Right ventricle myocardium inferior (tissue), 1 donor: ENCODE measurements at regions of chr10 and their contacts with region 1.

Region 1: GRCh38 chr10:26556748-26557640 is 118.9 kb downstream of the APBB1IP start:
- DNase-seq: no peak
- ATAC-seq: peak; percentile 56

Region 2: DNA sequence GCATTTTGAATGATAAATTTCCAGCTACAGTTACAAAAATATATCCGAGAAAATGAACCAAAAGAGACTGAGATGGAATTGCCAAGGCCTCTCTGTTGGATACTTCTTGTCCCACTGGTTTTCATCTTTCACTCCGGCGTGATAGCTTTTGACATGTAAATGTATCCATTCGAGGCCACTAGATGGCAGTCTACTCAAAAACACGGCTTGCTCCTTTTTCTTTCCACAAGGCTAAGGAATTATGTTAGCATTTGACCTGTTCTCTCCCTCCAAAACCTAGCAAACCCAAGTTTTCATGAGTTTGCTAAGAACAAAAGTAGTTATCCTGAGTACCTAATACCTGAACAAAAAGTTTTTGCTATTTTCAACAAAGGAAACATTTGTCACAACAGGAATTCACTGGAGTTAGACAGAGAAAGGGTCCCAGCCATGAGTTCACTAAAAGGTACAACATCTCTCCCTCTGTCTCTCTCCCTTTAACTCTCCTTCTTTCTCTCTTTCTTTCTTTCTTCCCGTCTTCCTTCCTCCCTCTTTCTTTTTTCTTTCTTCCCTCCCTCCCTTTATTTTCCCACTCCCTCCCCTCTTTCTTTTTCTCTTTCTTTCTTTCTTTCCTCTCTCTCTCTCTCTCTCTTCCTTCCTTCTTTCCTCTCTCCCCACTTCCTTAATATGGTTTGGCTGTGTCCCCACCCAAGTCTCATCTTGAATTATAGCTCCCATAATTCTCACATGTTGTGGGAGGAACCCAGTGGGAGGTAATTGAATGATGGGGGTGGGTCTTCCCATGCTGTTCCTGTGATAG is 830.9 kb before region 1 on chr10:
- intact Hi-C with region 1: loop called (anchors 10 kb)
- DNase-seq: no peak
- ATAC-seq: no peak

Region 3: DNA sequence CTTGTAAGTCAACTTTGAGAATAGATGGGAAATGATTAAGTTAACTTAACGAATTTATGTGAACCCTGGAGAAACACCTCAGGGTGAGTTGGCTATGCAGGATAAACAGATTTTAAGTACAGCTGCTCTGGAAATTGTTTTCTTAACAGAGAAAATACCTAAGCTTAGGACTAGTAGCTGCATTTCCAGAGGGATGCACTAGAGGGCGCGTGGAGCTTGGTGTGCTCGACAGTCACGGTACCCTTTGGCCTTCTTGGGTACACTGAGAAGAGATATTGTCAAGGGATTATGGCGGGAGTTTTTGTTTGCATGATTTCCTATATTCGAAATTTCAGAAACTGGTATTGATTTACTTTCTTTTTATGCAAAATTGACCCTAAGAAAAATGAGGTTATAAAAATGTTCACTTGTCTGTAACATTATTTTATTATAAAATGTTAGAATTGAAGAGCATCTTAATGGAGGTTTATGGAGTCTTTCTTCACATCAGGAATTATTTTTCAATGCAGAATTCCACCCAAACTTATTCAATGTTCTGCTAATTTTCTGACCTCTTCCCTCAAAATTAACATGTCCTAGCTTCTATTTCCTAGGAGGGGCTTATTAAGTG is 681.3 kb before region 1 on chr10:
- intact Hi-C with region 1: loop called (anchors 5 kb)
- DNase-seq: peak; percentile 69
- ATAC-seq: no peak

Region 4: DNA sequence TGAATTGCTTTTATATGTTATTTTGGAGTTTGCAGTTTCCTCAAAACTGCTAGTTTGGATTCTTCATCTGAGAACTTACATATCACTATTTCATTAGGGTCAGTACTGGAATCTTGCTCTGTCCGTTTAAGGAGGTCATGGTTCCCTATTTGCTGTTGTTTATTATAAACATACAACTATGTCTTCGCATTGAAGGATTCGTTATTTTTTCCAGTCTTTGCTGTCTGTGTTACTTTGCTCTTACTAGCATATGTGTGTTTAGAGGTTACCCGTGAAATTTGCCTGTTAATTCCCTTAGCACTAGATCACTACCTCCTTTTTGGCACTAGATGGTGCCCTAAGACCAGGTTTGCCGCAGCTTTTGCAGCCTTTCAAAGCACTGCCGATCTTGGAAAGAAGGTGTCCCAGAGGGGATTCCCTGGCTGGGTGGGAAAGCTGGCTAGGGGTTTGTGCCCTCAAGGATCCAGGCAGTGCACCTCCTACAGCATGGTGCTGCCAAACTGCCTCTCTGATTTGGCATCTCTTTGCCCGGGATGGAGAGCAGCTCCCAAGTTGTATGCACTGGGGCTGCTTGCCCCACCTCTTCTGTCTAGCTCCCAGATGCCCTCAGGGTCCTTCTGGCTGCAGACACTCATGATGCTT is 221.9 kb before region 1 on chr10:
- intact Hi-C with region 1: loop called (anchors 1 kb)
- DNase-seq: peak; percentile 70
- ATAC-seq: peak; percentile 54